ENCODE measurements at regions of chr1 and their contacts with region 1.

Region 1: DNA sequence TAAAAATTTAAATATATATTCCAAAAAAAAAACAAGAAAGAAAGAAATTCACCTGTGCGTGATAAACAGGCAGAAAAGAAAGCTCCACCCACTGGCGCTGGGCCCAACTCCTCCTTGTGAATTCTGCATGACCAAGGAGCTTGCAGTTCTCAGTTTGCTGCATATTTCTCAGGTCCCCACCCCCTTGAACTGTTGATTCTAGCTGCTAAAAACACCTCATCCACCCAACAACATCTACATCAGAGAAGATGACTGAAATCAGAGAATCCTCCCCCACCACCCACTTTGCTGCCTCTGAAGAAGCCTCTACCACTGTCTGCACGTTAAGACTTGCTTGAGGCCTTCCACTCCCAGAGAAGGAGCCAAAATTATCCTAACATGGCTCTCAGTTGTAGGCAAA is 104.8 kb downstream of the RGS2 start:
- DNase-seq: peak; percentile 81
- H3K4me3 Mint-ChIP-seq: peak overlapping the region; percentile 5
- H3K27ac Mint-ChIP-seq: peak overlapping the region; percentile 7
- H3K4me1 Mint-ChIP-seq: peaks cover 38% of the 10 kb centered on the region
- H3K27me3 Mint-ChIP-seq: no peaks in the 10 kb centered on the region
- CTCF ChIP-seq: no peak

Region 2: DNA sequence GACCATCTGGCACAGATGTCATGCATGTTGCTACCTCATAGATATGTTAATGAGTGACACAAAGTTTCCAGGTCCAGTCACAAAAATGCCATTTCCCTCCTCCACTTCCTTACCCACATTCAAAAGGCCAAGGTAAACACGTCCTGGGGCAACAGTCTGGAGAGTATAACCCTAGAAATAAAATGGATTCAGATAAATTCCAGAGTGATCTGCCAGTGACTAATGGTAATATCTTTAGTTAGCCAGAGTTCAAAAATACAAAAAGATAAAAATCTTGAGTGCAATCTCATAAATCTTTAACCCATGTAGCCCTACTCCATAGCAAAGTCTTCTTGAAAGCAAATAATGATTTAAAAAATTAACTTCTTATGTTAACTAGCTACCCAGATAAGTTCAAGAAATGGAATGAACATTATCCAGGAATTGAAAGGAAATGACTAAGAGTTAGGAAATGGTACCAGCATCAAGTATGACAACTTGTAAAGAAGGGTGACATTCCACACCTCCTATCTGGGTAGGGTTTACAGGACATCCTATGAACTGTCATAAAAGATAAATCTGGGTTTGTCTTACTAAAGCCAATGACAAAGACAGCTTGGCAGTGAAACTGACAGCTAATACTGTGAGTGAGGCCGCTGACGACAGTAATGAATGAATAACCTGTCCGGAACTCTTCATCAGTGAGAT is 86.7 kb before region 1 on chr1:
- CTCF ChIA-PET with region 1: no interaction called
- intact Hi-C with region 1: loop called (anchors 5 kb)
- DNase-seq: peak; percentile 44
- H3K4me3 Mint-ChIP-seq: peak overlapping the region; percentile 19
- H3K27ac Mint-ChIP-seq: peak overlapping the region; percentile 31
- H3K4me1 Mint-ChIP-seq: peaks cover 38% of the 10 kb centered on the region
- H3K27me3 Mint-ChIP-seq: no peaks in the 10 kb centered on the region
- CTCF ChIP-seq: no peak

Region 3: GRCh38 chr1:192974701-192975100 is 61.0 kb after region 1 on chr1:
- CTCF ChIA-PET with region 1: no interaction called
- intact Hi-C with region 1: loop called (anchors 5 kb)
- DNase-seq: peak; percentile 7
- H3K4me3 Mint-ChIP-seq: peak overlapping the region; percentile 20
- H3K27ac Mint-ChIP-seq: peak overlapping the region; percentile 73
- H3K4me1 Mint-ChIP-seq: peaks cover 68% of the 10 kb centered on the region
- H3K27me3 Mint-ChIP-seq: no peaks in the 10 kb centered on the region
- CTCF ChIP-seq: no peak

Region 4: GRCh38 chr1:193201021-193201420 is 287.3 kb after region 1 on chr1:
- CTCF ChIA-PET with region 1: no interaction called
- intact Hi-C with region 1: no loop called
- DNase-seq: no peak
- H3K4me3 Mint-ChIP-seq: no peak overlapping the region
- H3K27ac Mint-ChIP-seq: peak overlapping the region; percentile 27
- H3K4me1 Mint-ChIP-seq: peaks cover 22% of the 10 kb centered on the region
- H3K27me3 Mint-ChIP-seq: no peaks in the 10 kb centered on the region
- CTCF ChIP-seq: no peak